GM23248 (cell line): ENCODE measurements at regions of chr1 and their contacts with region 1.

Region 1: GRCh38 chr1:119139857-119140176 is 636 bp downstream of the WARS2 start:
- DNase-seq: no peak
- H3K4me3 ChIP-seq: peak overlapping the region; percentile 90
- H3K27ac ChIP-seq: peak overlapping the region; percentile 99
- H3K4me1 ChIP-seq: peaks cover 27% of the 10 kb centered on the region
- H3K27me3 ChIP-seq: no peaks in the 10 kb centered on the region

Region 2: GRCh38 chr1:118902711-118903191 is 237.1 kb before region 1 on chr1:
- in situ Hi-C with region 1: no loop called
- DNase-seq: peak; percentile 83
- H3K4me3 ChIP-seq: no peak overlapping the region
- H3K27ac ChIP-seq: peak overlapping the region; percentile 70
- H3K4me1 ChIP-seq: peaks cover 20% of the 10 kb centered on the region
- H3K27me3 ChIP-seq: no peaks in the 10 kb centered on the region

Region 3: DNA sequence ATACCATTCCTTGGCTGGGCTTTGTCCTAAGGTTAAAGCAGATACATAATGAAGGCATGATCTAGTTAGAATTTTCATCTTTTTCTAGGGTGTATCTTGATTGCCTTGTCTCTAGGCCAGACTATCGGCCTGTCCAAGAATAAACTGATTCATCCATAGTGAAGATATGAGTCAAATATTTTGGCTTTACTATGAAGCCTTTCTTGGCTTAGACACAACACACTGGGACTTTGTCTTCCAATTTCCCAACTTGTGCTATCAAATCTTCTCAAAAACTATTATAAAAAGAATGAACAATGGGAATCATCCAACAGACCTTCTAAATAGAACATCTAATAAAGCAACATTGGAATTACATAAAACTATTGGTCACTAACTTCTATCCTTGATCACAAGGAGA is 64.2 kb before region 1 on chr1:
- in situ Hi-C with region 1: loop called (anchors 5 kb)
- DNase-seq: peak; percentile 91
- H3K4me3 ChIP-seq: peak overlapping the region; percentile 13; the same call in 1 of the 2 replicates
- H3K27ac ChIP-seq: peak overlapping the region; percentile 64
- H3K4me1 ChIP-seq: peaks cover 26% of the 10 kb centered on the region
- H3K27me3 ChIP-seq: no peaks in the 10 kb centered on the region